Activated T-helper 1 cell treated with anti-CD3 and anti-CD28 coated beads, Interleukin-12 subunit alpha, Interleukin-12 subunit beta, Interleukin-2, Interleukin-4 antibody, amounts not matched to agents 30 ng/mL and 10 ng/mL and 1 ng/mL, durations not matched to agents 14 hours and 24 hours and 36 hours (primary cell): ENCODE measurements at regions of chr12 and their contacts with region 1.

Region 1: GRCh38 chr12:70733385-70733784 is 96.2 kb upstream of the PTPRB start:
- DNase-seq: no peak
- H3K4me3 Mint-ChIP-seq: no peak overlapping the region
- H3K27ac Mint-ChIP-seq: no peak overlapping the region
- H3K4me1 Mint-ChIP-seq: no peaks in the 10 kb centered on the region
- H3K27me3 Mint-ChIP-seq: peaks cover 6% of the 10 kb centered on the region

Region 2: GRCh38 chr12:69879041-69879960 is 854.1 kb before region 1 on chr12:
- intact Hi-C with region 1: loop called (anchors 1 kb)
- DNase-seq: peak; percentile 45
- H3K4me3 Mint-ChIP-seq: no peak overlapping the region
- H3K27ac Mint-ChIP-seq: no peak overlapping the region
- H3K4me1 Mint-ChIP-seq: peaks cover 8% of the 10 kb centered on the region
- H3K27me3 Mint-ChIP-seq: peaks cover 12% of the 10 kb centered on the region

Region 3: GRCh38 chr12:69900720-69901131 is 832.7 kb before region 1 on chr12:
- intact Hi-C with region 1: loop called (anchors 2 kb)
- DNase-seq: peak; percentile 29
- H3K4me3 Mint-ChIP-seq: no peak overlapping the region
- H3K27ac Mint-ChIP-seq: no peak overlapping the region
- H3K4me1 Mint-ChIP-seq: no peaks in the 10 kb centered on the region
- H3K27me3 Mint-ChIP-seq: peaks cover 2% of the 10 kb centered on the region

Region 4: GRCh38 chr12:70744133-70744532 is 10.7 kb after region 1 on chr12:
- intact Hi-C with region 1: no loop called
- DNase-seq: no peak
- H3K4me3 Mint-ChIP-seq: no peak overlapping the region
- H3K27ac Mint-ChIP-seq: no peak overlapping the region
- H3K4me1 Mint-ChIP-seq: no peaks in the 10 kb centered on the region
- H3K27me3 Mint-ChIP-seq: no peaks in the 10 kb centered on the region

Region 5: GRCh38 chr12:70849265-70849960 is 116.0 kb after region 1 on chr12:
- intact Hi-C with region 1: loop called (anchors 1 kb)
- DNase-seq: no peak
- H3K4me3 Mint-ChIP-seq: no peak overlapping the region
- H3K27ac Mint-ChIP-seq: no peak overlapping the region
- H3K4me1 Mint-ChIP-seq: no peaks in the 10 kb centered on the region
- H3K27me3 Mint-ChIP-seq: peaks cover 5% of the 10 kb centered on the region

Region 6: GRCh38 chr12:71392521-71393145 is 659.2 kb after region 1 on chr12:
- intact Hi-C with region 1: loop called (anchors 5 kb)
- DNase-seq: no peak
- H3K4me3 Mint-ChIP-seq: no peak overlapping the region
- H3K27ac Mint-ChIP-seq: no peak overlapping the region
- H3K4me1 Mint-ChIP-seq: no peaks in the 10 kb centered on the region
- H3K27me3 Mint-ChIP-seq: peaks cover 1% of the 10 kb centered on the region

Region 7: GRCh38 chr12:71746983-71747611 is 1013.7 kb after region 1 on chr12:
- intact Hi-C with region 1: loop called (anchors 2 kb)
- DNase-seq: peak; percentile 12
- H3K4me3 Mint-ChIP-seq: no peak overlapping the region
- H3K27ac Mint-ChIP-seq: no peak overlapping the region
- H3K4me1 Mint-ChIP-seq: no peaks in the 10 kb centered on the region
- H3K27me3 Mint-ChIP-seq: peaks cover 36% of the 10 kb centered on the region

Region 8: DNA sequence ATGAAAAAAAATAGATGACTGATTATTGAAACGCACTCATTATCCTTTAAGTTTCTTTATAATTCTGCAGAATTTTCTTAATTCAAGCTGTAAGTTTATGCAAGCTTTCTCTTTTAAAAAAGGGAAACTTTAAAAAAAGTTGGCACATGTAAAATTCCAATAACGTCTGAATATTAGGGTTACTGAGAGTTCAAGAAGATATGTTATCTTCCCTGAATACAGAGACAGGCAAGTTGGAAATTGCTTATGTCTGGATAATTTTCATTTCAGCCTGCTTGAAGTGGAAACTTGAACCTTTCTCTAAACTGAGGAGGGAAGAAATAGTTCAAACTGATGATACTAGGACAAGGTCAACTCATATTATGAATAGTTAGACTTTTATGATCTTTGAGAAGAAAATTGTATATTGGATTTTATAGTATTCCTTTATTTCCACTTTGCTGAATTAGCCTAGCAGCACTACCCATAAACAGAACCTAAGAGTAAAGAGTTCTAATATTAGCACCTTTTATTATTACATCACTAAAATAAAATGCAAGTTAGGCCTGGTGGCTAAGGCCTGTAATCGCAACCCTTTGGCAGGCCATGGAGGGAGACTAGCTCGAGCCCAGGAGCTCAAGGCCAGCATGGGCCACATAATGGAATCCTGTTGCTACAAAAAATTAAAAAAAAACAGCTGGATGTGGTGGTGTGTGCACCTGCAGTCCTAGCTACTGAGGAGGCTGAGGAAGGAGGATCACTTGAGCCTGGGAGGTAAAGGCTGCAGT is 1826.8 kb after region 1 on chr12:
- intact Hi-C with region 1: no loop called
- DNase-seq: no peak
- H3K4me3 Mint-ChIP-seq: no peak overlapping the region
- H3K27ac Mint-ChIP-seq: no peak overlapping the region
- H3K4me1 Mint-ChIP-seq: no peaks in the 10 kb centered on the region
- H3K27me3 Mint-ChIP-seq: no peaks in the 10 kb centered on the region